GM10248 (cell line): ENCODE measurements at regions of chr4 and their contacts with region 1.

Region 1: GRCh38 chr4:86816501-86817273 is 32.5 kb downstream of the SLC10A6 start:
- DNase-seq: no peak
- CTCF ChIP-seq: no peak

Region 2: DNA sequence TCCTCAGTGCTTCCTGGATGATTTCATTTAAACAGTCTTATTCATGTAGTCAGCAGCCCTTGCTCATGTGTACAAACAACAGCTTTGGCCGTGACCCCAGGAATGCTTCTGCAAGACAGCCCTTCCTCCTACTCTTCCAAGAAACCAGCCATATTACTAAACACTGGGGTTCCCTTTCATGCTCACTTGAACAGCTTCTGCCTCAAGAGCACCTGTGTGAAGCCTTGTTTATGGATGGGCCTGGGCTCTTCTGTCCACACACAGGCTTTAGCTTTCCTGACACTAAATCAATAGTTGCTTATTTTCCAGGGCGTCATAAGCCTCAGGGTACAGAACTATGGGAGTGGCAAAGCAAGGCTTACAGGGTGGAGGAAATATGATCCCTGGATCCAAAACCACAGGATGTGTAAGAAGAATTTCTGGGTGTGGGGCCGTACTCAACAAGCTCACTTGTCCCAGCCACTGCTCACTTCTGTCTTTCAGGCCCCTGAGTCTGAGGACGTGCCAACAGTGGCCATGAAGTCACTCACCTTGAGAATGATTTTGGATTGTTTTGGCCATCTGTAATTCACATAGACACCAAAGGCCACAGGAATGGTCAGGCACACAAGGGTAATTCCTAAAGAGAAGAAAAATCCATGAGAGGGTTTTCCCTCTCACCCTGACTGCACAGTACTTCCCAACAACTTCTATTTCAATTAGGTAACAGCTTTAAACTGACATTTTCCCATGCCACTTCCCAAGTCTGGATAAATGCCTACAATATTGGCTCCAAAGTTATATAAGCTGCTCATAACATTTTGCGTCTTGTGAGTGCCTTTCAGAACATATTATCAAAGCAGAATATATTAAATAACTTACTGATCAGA is 14.8 kb after region 1 on chr4:
- CTCF ChIA-PET with region 1: interaction called, 24 read pairs
- POLR2A ChIA-PET with region 1: no interaction called
- DNase-seq: no peak
- CTCF ChIP-seq: no peak

Region 3: GRCh38 chr4:86961605-86962295 is 145.1 kb after region 1 on chr4:
- CTCF ChIA-PET with region 1: no interaction called
- POLR2A ChIA-PET with region 1: no interaction called
- DNase-seq: peak; percentile 66
- CTCF ChIP-seq: no peak